ENCODE measurements at regions of chr1 and their contacts with region 1.

Region 1: DNA sequence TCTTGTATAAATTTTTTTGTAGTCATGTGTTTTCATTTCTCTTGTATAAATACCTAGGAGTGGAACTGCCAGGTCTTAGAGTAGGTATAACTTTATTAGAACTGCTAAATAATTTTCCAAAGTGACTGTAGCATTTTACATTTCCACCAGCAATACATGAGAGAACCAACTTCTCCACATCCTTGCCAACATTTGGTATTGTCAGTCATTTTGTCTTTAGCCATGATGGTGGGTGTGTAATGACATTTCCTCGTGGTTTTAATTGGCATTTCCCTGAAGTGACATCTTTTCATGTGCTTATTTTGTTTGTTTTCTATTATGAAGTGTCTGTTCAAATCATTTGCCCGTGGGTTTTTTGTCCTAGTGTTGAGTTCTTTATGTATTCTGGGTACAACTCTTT is 29.7 kb downstream of the ZBTB8A start:
- DNase-seq: no peak
- H3K4me3 ChIP-seq: no peak overlapping the region
- H3K27ac ChIP-seq: no peak overlapping the region
- H3K4me1 ChIP-seq: no peaks in the 10 kb centered on the region
- H3K27me3 ChIP-seq: no peaks in the 10 kb centered on the region
- CTCF ChIP-seq: no peak
- POLR2A ChIP-seq: no peak

Region 2: GRCh38 chr1:32494196-32494595 is 74.7 kb before region 1 on chr1:
- intact Hi-C with region 1: loop called (anchors 2 kb)
- DNase-seq: no peak
- H3K4me3 ChIP-seq: no peak overlapping the region
- H3K27ac ChIP-seq: no peak overlapping the region
- H3K4me1 ChIP-seq: no peaks in the 10 kb centered on the region
- H3K27me3 ChIP-seq: no peaks in the 10 kb centered on the region
- CTCF ChIP-seq: no peak
- POLR2A ChIP-seq: no peak

Region 3: DNA sequence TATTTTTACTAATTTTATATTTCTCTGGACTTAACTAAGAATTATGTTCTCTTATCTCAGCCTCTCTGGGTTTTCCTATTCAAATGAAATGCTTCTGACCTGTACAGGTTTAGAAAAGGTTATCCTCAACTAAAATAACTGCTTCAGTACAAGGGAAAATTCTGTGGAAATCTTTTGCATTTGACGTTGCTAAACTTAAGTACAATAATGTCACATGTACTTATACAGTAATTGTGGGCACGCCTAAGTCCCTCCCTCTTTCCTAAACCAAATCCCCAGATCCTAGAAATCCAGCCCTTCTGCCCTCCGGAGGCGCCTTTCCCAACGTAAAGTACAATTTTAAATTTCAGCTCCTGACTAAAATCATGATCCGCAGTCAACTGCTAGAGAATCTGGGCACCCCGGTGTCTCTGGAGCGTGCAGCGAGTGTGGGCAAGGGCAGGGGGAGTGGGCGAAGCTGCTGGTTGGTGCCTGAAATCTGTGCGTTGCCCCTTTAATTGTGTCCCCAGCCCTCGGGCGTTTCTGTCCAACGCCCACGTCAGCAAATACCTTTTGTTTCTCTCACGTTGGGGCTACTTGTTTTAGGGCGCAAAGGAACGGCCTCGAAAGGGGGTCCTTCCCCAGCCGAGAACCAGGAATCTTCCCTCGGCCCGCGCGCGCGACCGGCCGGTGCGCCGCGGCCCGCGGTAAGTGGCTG is 29.9 kb before region 1 on chr1 and contains the start of gene ZBTB8A:
- intact Hi-C with region 1: no loop called
- DNase-seq: peak in 1 of 2 donors; percentile 27
- H3K4me3 ChIP-seq: peak within 1 kb of the TSS; percentile 61 to 78 (median 70)
- H3K27ac ChIP-seq: peak within 1 kb of the TSS; percentile 66 to 82
- H3K4me1 ChIP-seq: no peaks in the 10 kb centered on the region
- H3K27me3 ChIP-seq: no peaks in the 10 kb centered on the region
- CTCF ChIP-seq: no peak
- POLR2A ChIP-seq: no peak
- total RNA-seq, gene ZBTB8A: 6.6 to 10.0 (median 9.6) TPM

Region 4: DNA sequence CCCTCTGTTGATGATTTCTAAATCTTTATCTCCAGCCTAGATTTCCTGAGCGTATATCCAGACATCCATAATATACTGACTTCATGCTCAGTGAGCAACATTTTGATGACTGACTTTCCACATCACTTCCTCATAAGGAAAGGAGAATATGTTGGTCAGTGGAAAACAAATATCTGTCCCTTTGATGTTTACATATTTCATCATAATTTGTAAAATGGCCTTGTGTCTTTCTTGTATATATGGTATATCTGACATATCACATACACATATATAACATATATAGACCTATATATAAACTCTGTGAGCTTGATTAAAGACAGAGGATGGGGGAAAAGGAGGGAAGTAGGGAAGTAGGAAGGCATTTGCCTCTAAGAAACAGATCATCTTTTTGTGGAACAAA is 11.1 kb before region 1 on chr1:
- intact Hi-C with region 1: loop called (anchors 1 kb)
- DNase-seq: no peak
- H3K4me3 ChIP-seq: no peak overlapping the region
- H3K27ac ChIP-seq: no peak overlapping the region
- H3K4me1 ChIP-seq: no peaks in the 10 kb centered on the region
- H3K27me3 ChIP-seq: no peaks in the 10 kb centered on the region
- CTCF ChIP-seq: no peak
- POLR2A ChIP-seq: no peak

Measured in breast epithelium (tissue), 4 donors.